Activated CD8-positive, alpha-beta memory T cell treated with anti-CD3 and anti-CD28 coated beads, Interleukin-2, amount 10 ng/mL, durations not matched to agents 7 days and 5 days (primary cell): ENCODE measurements at regions of chr3 and their contacts with region 1.

Region 1: GRCh38 chr3:108602249-108602934 is 12.9 kb downstream of the DZIP3 start:
- DNase-seq: peak; percentile 72
- ATAC-seq: peak; percentile 77
- H3K4me3 Mint-ChIP-seq: peak overlapping the region; percentile 68
- H3K27ac Mint-ChIP-seq: peak overlapping the region; percentile 88
- H3K4me1 Mint-ChIP-seq: peaks cover 66% of the 10 kb centered on the region
- H3K27me3 Mint-ChIP-seq: no peaks in the 10 kb centered on the region

Region 2: GRCh38 chr3:108589146-108589997 is 13.0 kb before region 1 on chr3 and contains the starts of genes CIP2A and DZIP3:
- CTCF ChIA-PET with region 1: interaction called, 39 read pairs
- DNase-seq: peak; percentile 95
- ATAC-seq: peak; percentile 89
- H3K4me3 Mint-ChIP-seq: peak within 1 kb of the TSS; percentile 86
- H3K27ac Mint-ChIP-seq: peak within 1 kb of the TSS; percentile 99
- H3K4me1 Mint-ChIP-seq: peaks cover 52% of the 10 kb centered on the region
- H3K27me3 Mint-ChIP-seq: no peaks in the 10 kb centered on the region
- total RNA-seq, gene CIP2A: 66.6 to 71.3 TPM
- total RNA-seq, gene DZIP3: 25.0 to 26.3 TPM